ENCODE measurements at regions of chr3 and their contacts with region 1.

Region 1: DNA sequence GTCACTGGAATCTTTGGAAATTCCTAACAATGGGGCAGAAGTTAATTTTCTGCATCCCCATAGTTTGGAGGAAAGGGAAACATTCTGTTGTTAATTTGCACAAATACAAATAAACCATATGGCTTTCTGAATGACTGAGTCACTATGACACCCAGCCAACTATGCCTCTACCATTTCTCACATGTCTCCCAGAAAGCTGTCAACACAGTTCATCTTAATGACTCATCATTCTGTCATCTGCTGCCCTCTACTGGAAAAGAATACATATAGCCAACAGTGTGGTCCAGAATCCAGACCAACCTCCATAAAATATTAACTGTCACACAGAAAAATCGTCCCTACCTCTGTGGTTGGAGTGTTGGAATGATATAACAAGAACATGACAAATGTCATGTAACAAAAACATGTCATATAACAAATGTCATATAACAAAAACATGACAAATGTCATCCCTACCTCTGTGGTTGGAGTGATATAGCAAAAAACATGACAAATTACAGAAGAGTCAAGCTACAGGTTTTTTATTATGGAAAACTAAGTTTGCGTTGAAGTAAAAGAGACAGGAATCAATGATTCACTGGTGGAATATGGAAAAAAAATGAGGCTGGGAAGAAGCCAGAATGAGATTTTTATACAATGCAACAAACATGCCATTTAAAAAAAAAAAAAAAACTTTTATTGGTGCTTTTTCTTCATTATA is 47.7 kb upstream of the GYG1 start:
- DNase-seq: peak; percentile 53 to 54
- ATAC-seq: peak; percentile 99 to 100
- H3K4me3 ChIP-seq: no peak overlapping the region
- H3K27ac ChIP-seq: peak overlapping the region in 1 of 4 donors; percentile 7
- H3K4me1 ChIP-seq: peaks cover 0 to 8% of the 10 kb centered on the region in 2 donors
- H3K27me3 ChIP-seq: no peaks in the 10 kb centered on the region
- CTCF ChIP-seq: peak; percentile 71 to 77 (median 76)
- POLR2A ChIP-seq: no peak

Region 2: GRCh38 chr3:148309390-148310035 is 634.1 kb before region 1 on chr3:
- in situ Hi-C with region 1: no loop called
- intact Hi-C with region 1: loop called (anchors 5 kb)
- DNase-seq: no peak
- ATAC-seq: no peak
- H3K4me3 ChIP-seq: no peak overlapping the region
- H3K27ac ChIP-seq: no peak overlapping the region
- H3K4me1 ChIP-seq: no peaks in the 10 kb centered on the region
- H3K27me3 ChIP-seq: no peaks in the 10 kb centered on the region
- CTCF ChIP-seq: peak in 2 of 5 experiments; percentile 38 to 46
- POLR2A ChIP-seq: no peak

Region 3: DNA sequence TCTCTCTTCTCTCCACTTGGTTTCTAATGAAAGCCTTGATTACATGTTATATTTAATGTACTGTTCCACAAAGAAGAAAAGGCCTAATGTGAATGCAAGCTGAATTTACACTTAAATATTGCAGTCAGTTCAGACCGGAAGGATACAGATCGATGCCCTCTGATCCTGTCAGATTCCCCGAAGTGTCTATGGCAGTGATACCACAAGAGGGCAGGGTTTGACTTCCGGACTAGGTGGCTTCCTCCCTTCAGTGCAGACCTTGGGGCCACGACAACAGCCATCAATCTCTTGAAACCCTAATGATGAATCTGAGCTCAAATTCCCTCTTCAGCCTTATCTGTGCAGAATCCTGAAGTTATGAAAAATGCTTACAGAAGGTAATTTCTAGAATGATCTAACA is 216.4 kb before region 1 on chr3:
- in situ Hi-C with region 1: no loop called
- intact Hi-C with region 1: loop called (anchors 2 kb)
- DNase-seq: no peak
- ATAC-seq: no peak
- H3K4me3 ChIP-seq: no peak overlapping the region
- H3K27ac ChIP-seq: no peak overlapping the region
- H3K4me1 ChIP-seq: no peaks in the 10 kb centered on the region
- H3K27me3 ChIP-seq: no peaks in the 10 kb centered on the region
- CTCF ChIP-seq: peak in 1 of 5 experiments; percentile 30
- POLR2A ChIP-seq: no peak

Region 4: GRCh38 chr3:148861277-148861869 is 82.3 kb before region 1 on chr3:
- in situ Hi-C with region 1: loop called in 3 of 4 experiments (anchors 5 to 10 kb)
- intact Hi-C with region 1: loop called (anchors 1 kb)
- DNase-seq: no peak
- ATAC-seq: peak; percentile 72 to 78
- H3K4me3 ChIP-seq: no peak overlapping the region
- H3K27ac ChIP-seq: no peak overlapping the region
- H3K4me1 ChIP-seq: peaks cover 5% of the 10 kb centered on the region in 2 donors
- H3K27me3 ChIP-seq: no peaks in the 10 kb centered on the region
- CTCF ChIP-seq: peak; percentile 63 to 83 (median 78)
- POLR2A ChIP-seq: no peak

Region 5: DNA sequence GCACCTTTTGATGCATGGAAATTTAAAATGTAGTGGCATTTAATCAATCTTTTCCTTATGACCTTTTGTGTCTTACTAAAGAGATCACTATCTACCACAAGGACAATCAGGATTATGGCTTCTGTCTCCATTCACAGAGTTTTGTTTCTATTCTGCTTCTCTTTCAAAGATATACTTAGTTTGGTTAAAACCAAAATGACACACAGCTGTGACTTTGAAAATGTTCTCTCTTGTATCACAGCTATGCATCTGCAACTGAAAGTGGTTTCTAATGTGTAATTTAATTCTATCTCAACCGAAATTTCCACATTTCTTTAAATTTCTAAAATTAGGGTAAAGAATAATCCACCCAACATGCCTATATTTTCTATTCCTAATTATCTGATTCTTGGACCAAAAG is 114.9 kb after region 1 on chr3:
- in situ Hi-C with region 1: no loop called
- intact Hi-C with region 1: no loop called
- DNase-seq: no peak
- ATAC-seq: no peak
- H3K4me3 ChIP-seq: no peak overlapping the region
- H3K27ac ChIP-seq: no peak overlapping the region
- H3K4me1 ChIP-seq: no peaks in the 10 kb centered on the region
- H3K27me3 ChIP-seq: no peaks in the 10 kb centered on the region
- CTCF ChIP-seq: no peak
- POLR2A ChIP-seq: no peak